Mucosa of descending colon (tissue), 3 donors: ENCODE measurements at regions of chr10 and their contacts with region 1.

Region 1: GRCh38 chr10:9209105-9209798 is 1154.8 kb downstream of the GATA3 start:
- DNase-seq: peak in 2 of 3 donors; percentile 56 to 73
- ATAC-seq: peak; percentile 60
- H3K4me3 ChIP-seq: no peak overlapping the region
- H3K4me1 ChIP-seq: no peaks in the 10 kb centered on the region
- CTCF ChIP-seq: peak; percentile 80

Region 2: GRCh38 chr10:7872041-7872442 is 1337.2 kb before region 1 on chr10:
- intact Hi-C with region 1: loop called (anchors 5 to 10 kb)
- DNase-seq: no peak
- ATAC-seq: peak; percentile 51
- H3K4me3 ChIP-seq: no peak overlapping the region
- H3K4me1 ChIP-seq: no peaks in the 10 kb centered on the region
- CTCF ChIP-seq: peak; percentile 45

Region 3: GRCh38 chr10:9381733-9382532 is 172.7 kb after region 1 on chr10:
- intact Hi-C with region 1: no loop called
- DNase-seq: no peak
- ATAC-seq: no peak
- H3K4me3 ChIP-seq: no peak overlapping the region
- H3K4me1 ChIP-seq: no peaks in the 10 kb centered on the region
- CTCF ChIP-seq: no peak